Naive thymus-derived CD4-positive, alpha-beta T cell (primary cell): ENCODE measurements at regions of chr11 and their contacts with region 1.

Region 1: GRCh38 chr11:61792310-61793085 is at the starts of genes FEN1 and TMEM258:
- DNase-seq: peak; percentile 82 to 91 (median 88)
- ATAC-seq: peak; percentile 91
- H3K4me3 ChIP-seq: peak within 1 kb of the TSS; percentile 82
- H3K4me3 Mint-ChIP-seq: peak within 1 kb of the TSS; percentile 91 to 99 (median 96)
- H3K27ac ChIP-seq: peak within 1 kb of the TSS; percentile 96
- H3K27ac Mint-ChIP-seq: peak within 1 kb of the TSS; percentile 96 to 100 (median 99)
- H3K4me1 ChIP-seq: peaks cover 9 to 14% of the 10 kb centered on the region in 2 donors
- H3K4me1 Mint-ChIP-seq: peaks cover 14 to 57% (median 34%) of the 10 kb centered on the region in 7 donors
- H3K27me3 ChIP-seq: no peaks in the 10 kb centered on the region
- H3K27me3 Mint-ChIP-seq: no peaks in the 10 kb centered on the region
- total RNA-seq, gene FEN1: 7.6 to 101 (median 7.9) TPM
- total RNA-seq, gene TMEM258: 58.4 to 182 (median 83.3) TPM

Region 2: DNA sequence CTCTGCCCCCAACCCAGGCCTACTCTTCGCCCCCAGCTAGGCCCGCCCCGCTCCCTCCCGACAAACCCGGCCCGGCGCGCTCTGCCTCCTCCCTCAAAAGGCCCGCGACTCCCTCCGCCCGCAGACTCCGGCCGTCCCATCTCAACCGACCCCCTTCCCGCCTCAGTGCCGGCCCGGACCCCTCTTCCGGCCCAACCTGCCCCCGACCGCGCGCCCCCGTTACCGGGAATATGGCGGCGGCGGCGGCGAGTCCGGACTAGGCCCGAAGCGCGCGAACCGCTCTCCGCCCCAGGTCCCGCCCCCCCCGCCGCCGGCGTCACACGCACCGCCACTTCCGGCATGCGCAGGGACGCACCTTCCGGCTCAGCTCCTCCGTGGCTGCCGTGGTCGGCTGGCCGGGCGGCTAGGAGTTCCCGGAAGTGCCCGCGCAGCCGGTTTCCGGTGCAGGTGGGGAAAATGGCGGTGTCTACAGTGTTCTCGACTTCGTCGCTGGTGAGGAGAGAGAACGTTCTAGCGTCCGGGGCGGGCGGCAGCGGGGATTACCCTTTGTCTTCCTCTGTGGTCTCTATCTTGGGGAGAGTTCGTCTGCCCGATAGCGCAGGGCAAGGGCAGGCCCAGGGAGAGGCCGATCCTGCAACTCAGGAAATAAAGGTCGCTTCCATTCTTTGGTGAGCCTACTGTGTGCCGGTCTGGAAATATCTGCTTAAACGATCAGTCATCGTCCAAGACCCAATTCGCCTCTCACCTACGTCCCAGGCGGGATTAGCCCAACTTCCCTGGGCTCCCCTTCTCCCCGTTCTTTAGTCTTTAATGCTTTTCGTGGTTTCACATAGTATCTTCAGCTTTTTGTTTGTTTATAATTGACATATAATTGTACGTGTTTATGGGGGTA is 362.6 kb before region 1 on chr11 and contains the starts of genes CPSF7 and SDHAF2:
- CTCF ChIA-PET with region 1: interaction called, 3 read pairs
- POLR2A ChIA-PET with region 1: no interaction called
- intact Hi-C with region 1: loop called in 1 of 2 experiments (anchors 1 kb)
- DNase-seq: peak; percentile 96 to 99 (median 97)
- ATAC-seq: peak; percentile 93
- H3K4me3 ChIP-seq: peak within 1 kb of the TSS; percentile 91
- H3K4me3 Mint-ChIP-seq: peak within 1 kb of the TSS; percentile 89 to 100 (median 97)
- H3K27ac ChIP-seq: peak within 1 kb of the TSS; percentile 98
- H3K27ac Mint-ChIP-seq: peak within 1 kb of the TSS; percentile 97 to 100 (median 99)
- H3K4me1 ChIP-seq: peaks cover 20 to 33% of the 10 kb centered on the region in 2 donors
- H3K4me1 Mint-ChIP-seq: peaks cover 31 to 86% (median 69%) of the 10 kb centered on the region in 7 donors
- H3K27me3 ChIP-seq: no peaks in the 10 kb centered on the region
- H3K27me3 Mint-ChIP-seq: peaks cover 0 to 2% (median 0%) of the 10 kb centered on the region in 5 donors
- total RNA-seq, gene CPSF7: 96.0 to 174 (median 113) TPM
- total RNA-seq, gene SDHAF2: 36.1 to 56.6 (median 48.2) TPM

Region 3: GRCh38 chr11:61827571-61828378 is 35.3 kb after region 1 on chr11 and contains the start of gene FADS2:
- CTCF ChIA-PET with region 1: no interaction called
- POLR2A ChIA-PET with region 1: interaction called, 3 read pairs
- intact Hi-C with region 1: loop called (anchors 1 kb)
- DNase-seq: peak; percentile 44 to 94 (median 65)
- ATAC-seq: peak; percentile 92
- H3K4me3 ChIP-seq: peak within 1 kb of the TSS; percentile 64
- H3K4me3 Mint-ChIP-seq: peak within 1 kb of the TSS; percentile 77 to 91 (median 84)
- H3K27ac ChIP-seq: peak within 1 kb of the TSS; percentile 43
- H3K27ac Mint-ChIP-seq: peak within 1 kb of the TSS in 4 of 9 donors; percentile 14 to 93 (median 80)
- H3K4me1 ChIP-seq: peaks cover 5 to 11% of the 10 kb centered on the region in 2 donors
- H3K4me1 Mint-ChIP-seq: peaks cover 10 to 51% (median 21%) of the 10 kb centered on the region in 7 donors
- H3K27me3 ChIP-seq: no peaks in the 10 kb centered on the region
- H3K27me3 Mint-ChIP-seq: peaks cover 0 to 38% (median 24%) of the 10 kb centered on the region in 5 donors
- total RNA-seq, gene FADS2: 0.19 to 192 (median 2.1) TPM

Region 4: DNA sequence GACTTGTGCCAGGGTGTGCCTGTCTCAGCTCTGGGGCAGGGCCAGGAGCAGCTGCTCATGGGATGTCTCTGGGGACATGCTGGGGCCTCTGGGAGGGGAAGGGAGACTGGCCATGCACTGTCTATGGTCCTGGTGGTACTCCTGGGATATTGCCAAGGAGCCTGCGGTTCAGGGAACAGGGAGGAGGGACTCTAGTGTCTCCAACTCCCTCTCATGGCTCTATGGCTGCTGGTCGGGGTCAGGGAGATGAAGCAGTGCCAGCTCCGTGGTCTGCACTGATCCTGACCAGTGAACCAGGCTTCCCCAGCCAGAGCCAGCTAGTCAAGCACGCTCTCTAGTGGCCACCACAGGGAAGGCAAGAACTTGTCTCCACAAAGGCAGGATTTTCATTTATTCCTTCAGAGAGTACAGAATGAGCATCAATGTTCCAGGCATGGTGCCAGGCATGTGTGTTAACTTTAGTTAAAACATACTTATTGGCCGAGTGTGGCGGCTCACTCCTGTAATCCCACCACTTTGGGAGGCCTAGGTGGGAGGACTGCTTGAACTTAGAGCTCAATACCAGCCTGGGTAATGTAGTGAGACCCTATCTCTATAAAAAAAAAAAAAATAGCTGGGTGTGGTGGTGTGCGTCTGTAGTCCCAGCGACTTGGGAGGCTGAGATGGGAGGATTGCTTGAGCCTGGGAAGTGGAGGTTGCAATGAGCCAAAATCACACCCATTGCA is 155.2 kb after region 1 on chr11:
- CTCF ChIA-PET with region 1: interaction called, 25 read pairs
- POLR2A ChIA-PET with region 1: no interaction called
- intact Hi-C with region 1: loop called (anchors 1 kb)
- DNase-seq: peak; percentile 41 to 64 (median 47)
- ATAC-seq: peak; percentile 88
- H3K4me3 ChIP-seq: no peak overlapping the region
- H3K4me3 Mint-ChIP-seq: no peak overlapping the region
- H3K27ac ChIP-seq: no peak overlapping the region
- H3K27ac Mint-ChIP-seq: peak overlapping the region in 2 of 9 donors; percentile 14 to 70
- H3K4me1 ChIP-seq: peaks cover 0 to 3% of the 10 kb centered on the region in 2 donors
- H3K4me1 Mint-ChIP-seq: peaks cover 0 to 5% (median 0%) of the 10 kb centered on the region in 7 donors
- H3K27me3 ChIP-seq: no peaks in the 10 kb centered on the region
- H3K27me3 Mint-ChIP-seq: peaks cover 0 to 6% (median 3%) of the 10 kb centered on the region in 5 donors

Region 5: GRCh38 chr11:62081378-62082291 is 289.1 kb after region 1 on chr11:
- CTCF ChIA-PET with region 1: interaction called, 66 read pairs
- POLR2A ChIA-PET with region 1: interaction called, 6 read pairs
- intact Hi-C with region 1: loop called (anchors 1 kb)
- DNase-seq: peak; percentile 62 to 85 (median 77)
- ATAC-seq: peak; percentile 96
- H3K4me3 ChIP-seq: no peak overlapping the region
- H3K4me3 Mint-ChIP-seq: peak overlapping the region in 9 of 10 donors; percentile 40 to 70 (median 55)
- H3K27ac ChIP-seq: no peak overlapping the region
- H3K27ac Mint-ChIP-seq: peak overlapping the region in 6 of 9 donors; percentile 10 to 91 (median 76)
- H3K4me1 ChIP-seq: peaks cover 0 to 7% of the 10 kb centered on the region in 2 donors
- H3K4me1 Mint-ChIP-seq: peaks cover 0 to 13% (median 6%) of the 10 kb centered on the region in 7 donors
- H3K27me3 ChIP-seq: no peaks in the 10 kb centered on the region
- H3K27me3 Mint-ChIP-seq: peaks cover 0 to 9% (median 0%) of the 10 kb centered on the region in 5 donors

Region 6: DNA sequence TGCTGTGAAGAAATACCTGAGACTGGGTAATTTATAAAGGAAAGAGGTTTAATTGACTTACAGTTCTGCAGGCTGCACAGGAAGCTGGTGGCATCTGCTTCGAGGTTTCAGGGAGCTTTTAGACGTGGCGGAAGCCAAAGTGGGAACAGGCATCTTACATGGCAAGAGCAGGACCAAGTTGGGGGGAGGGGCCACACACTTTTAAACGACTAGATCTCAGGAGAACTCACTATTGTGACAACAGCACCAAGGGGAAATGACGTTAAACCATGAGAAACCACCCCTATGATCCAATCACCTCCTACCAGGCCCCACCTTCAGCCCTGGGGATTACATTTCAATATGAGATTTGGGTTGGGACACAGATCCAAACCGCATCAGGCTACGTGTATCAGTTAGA is 517.5 kb after region 1 on chr11:
- CTCF ChIA-PET with region 1: interaction called, 9 read pairs
- POLR2A ChIA-PET with region 1: no interaction called
- intact Hi-C with region 1: loop called (anchors 1 to 5 kb)
- DNase-seq: no peak
- ATAC-seq: no peak
- H3K4me3 ChIP-seq: no peak overlapping the region
- H3K4me3 Mint-ChIP-seq: peak overlapping the region in 1 of 10 donors; percentile 5
- H3K27ac ChIP-seq: no peak overlapping the region
- H3K27ac Mint-ChIP-seq: no peak overlapping the region
- H3K4me1 ChIP-seq: no peaks in the 10 kb centered on the region
- H3K4me1 Mint-ChIP-seq: peaks cover 0 to 16% (median 13%) of the 10 kb centered on the region in 7 donors
- H3K27me3 ChIP-seq: no peaks in the 10 kb centered on the region
- H3K27me3 Mint-ChIP-seq: peaks cover 14 to 61% (median 42%) of the 10 kb centered on the region in 5 donors